ENCODE measurements at regions of chr1 and their contacts with region 1.

Region 1: DNA sequence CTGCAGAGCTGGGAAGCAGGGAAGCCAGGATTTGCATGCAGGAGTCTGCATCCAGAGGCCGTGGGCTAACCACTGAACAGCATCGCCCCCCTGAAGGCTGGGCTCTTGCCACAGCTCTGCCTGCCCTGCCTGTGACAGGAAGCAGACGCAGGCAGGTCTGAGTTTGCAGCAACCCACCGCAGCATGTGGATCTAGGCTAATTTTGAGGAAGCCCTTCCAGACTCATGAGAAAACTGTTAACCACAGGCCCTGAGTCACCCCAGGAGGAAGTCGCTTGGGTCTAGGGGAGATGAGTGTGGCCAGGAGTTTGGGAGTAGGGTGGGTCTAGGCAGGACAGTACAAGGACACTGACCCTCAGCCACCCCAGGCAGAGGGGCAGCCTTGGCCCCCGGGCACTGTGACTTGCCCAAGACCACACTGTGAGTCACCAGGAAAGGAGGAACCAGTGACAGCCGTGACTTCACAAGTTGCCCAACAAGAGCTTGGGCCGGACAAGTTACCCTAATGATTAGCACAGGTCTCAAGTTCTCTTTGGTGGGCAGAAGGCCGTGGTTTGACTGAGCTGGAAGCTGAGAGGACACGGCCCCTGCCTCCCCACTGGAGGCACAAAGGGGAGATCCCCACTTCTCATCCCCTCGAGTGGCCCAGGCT is 904 bp downstream of the LAPTM5 start:
- DNase-seq: peak; percentile 80
- H3K4me3 ChIP-seq: peak overlapping the region; percentile 69
- H3K27ac ChIP-seq: peak overlapping the region; percentile 99
- H3K4me1 ChIP-seq: peaks cover 99% of the 10 kb centered on the region
- CTCF ChIP-seq: no peak

Region 2: GRCh38 chr1:30730346-30731108 is 26.1 kb before region 1 on chr1:
- CTCF ChIA-PET with region 1: interaction called, 5 read pairs
- POLR2A ChIA-PET with region 1: interaction called, 6 read pairs
- intact Hi-C with region 1: loop called (anchors 1 kb)
- DNase-seq: peak; percentile 81
- H3K4me3 ChIP-seq: peak overlapping the region; percentile 2
- H3K27ac ChIP-seq: no peak overlapping the region
- H3K4me1 ChIP-seq: peaks cover 37% of the 10 kb centered on the region
- CTCF ChIP-seq: no peak

Region 3: GRCh38 chr1:30743584-30744059 is 13.0 kb before region 1 on chr1:
- CTCF ChIA-PET with region 1: interaction called, 7 read pairs
- POLR2A ChIA-PET with region 1: interaction called, 55 read pairs
- intact Hi-C with region 1: loop called (anchors 1 kb)
- DNase-seq: peak; percentile 89
- H3K4me3 ChIP-seq: peak overlapping the region; percentile 31
- H3K27ac ChIP-seq: peak overlapping the region; percentile 74
- H3K4me1 ChIP-seq: peaks cover 85% of the 10 kb centered on the region
- CTCF ChIP-seq: no peak; the same call in 1 of the 2 replicates

Measured in OCI-LY7 (cell line).